HepG2 (cell line): ENCODE measurements at regions of chr7 and their contacts with region 1.

Region 1: DNA sequence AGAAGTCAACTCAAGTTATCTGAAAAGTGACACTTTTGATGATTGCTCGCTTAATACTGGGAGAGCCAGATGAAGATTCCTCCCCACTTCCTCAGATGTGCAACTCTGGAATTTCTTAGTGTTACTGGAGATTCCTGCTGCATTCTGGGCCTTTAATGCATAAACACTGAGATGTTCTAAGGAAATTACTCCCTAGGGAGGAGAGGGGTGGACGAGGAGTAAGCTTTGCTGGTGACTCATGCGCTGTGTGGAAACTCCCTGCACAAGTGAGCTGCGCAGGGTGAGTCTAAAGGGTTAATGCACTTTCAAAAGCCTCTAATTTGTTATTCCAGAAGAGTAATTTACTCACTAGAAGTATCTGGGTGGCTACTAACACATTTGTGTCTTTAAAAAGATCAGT is 46.3 kb downstream of the EGFR start:
- DNase-seq: no peak
- ATAC-seq: no peak
- H3K4me3 ChIP-seq: no peak overlapping the region
- H3K27ac ChIP-seq: peak overlapping the region; percentile 69
- H3K4me1 ChIP-seq: peaks cover 60% of the 10 kb centered on the region
- H3K27me3 ChIP-seq: no peaks in the 10 kb centered on the region
- CTCF ChIP-seq: no peak
- EP300 ChIP-seq: no peak
- POLR2A ChIP-seq: no peak
- RAD21 ChIP-seq: no peak

Region 2: GRCh38 chr7:55034776-55035175 is 30.3 kb before region 1 on chr7:
- CTCF ChIA-PET with region 1: no interaction called
- POLR2A ChIA-PET with region 1: no interaction called
- in situ Hi-C with region 1: no loop called
- intact Hi-C with region 1: loop called (anchors 2 kb)
- DNase-seq: peak; percentile 58
- ATAC-seq: peak; percentile 71
- H3K4me3 ChIP-seq: no peak overlapping the region
- H3K27ac ChIP-seq: peak overlapping the region; percentile 49
- H3K4me1 ChIP-seq: peaks cover 58% of the 10 kb centered on the region
- H3K27me3 ChIP-seq: no peaks in the 10 kb centered on the region
- CTCF ChIP-seq: no peak
- EP300 ChIP-seq: 0 out of 4 replicates have a peak, but pooled peaks of 1 of the 2 experiments have one; percentile 6
- POLR2A ChIP-seq: no peak
- RAD21 ChIP-seq: no peak

Region 3: GRCh38 chr7:55308188-55308929 is 243.3 kb after region 1 on chr7:
- CTCF ChIA-PET with region 1: no interaction called
- POLR2A ChIA-PET with region 1: no interaction called
- in situ Hi-C with region 1: no loop called
- intact Hi-C with region 1: no loop called
- DNase-seq: peak; percentile 30
- ATAC-seq: peak; percentile 69
- H3K4me3 ChIP-seq: no peak overlapping the region
- H3K27ac ChIP-seq: no peak overlapping the region
- H3K4me1 ChIP-seq: no peaks in the 10 kb centered on the region
- H3K27me3 ChIP-seq: peaks cover 0 to 26% of the 10 kb centered on the region in 2 experiments; a peak in 2 of 5 replicates
- CTCF ChIP-seq: no peak
- EP300 ChIP-seq: no peak
- POLR2A ChIP-seq: no peak
- RAD21 ChIP-seq: no peak